Gastrocnemius medialis (tissue), 4 donors: ENCODE measurements at regions of chr5 and their contacts with region 1.

Region 1: DNA sequence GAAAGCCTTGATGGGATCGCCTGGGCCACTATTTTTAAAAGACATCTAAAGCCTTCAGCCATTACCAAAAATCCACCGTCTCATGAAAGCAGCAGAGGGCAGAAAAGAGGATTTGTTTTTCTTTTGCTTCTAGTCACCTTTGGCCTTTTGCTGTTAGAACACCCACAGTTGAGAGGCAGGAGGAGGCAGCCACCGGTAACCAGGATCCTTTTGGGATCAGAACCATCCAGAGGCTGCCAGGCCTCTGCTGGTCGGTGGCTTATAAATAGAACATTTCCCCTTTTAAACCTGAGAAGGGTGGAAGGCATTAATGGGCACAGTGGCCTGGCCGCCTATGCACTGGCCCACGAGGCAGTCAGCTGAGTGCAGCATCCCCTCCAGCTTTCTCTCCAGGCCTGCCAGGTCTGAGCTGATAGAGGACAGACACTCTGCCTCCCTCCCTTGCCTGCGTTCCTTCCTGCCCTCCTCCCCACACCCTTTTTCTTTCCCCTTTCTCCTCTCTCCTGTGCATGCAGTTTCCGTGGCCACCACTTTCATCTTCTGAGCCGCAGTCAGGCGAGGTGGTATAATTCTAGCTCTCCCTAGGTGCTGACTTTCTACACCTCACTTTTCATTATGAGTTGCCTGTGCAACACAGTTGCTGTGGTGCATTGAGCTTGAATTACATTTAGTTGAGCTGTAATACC is 253.4 kb downstream of the ARHGAP26 start:
- DNase-seq: peak; percentile 91 to 97
- ATAC-seq: peak; percentile 88 to 89
- H3K4me3 ChIP-seq: peak overlapping the region in 1 of 4 donors; percentile 33
- H3K27ac ChIP-seq: peak overlapping the region; percentile 84 to 97 (median 90)
- H3K4me1 ChIP-seq: peaks cover 41 to 49% of the 10 kb centered on the region in 2 donors
- H3K27me3 ChIP-seq: no peaks in the 10 kb centered on the region
- CTCF ChIP-seq: peak in 2 of 5 experiments; percentile 9 to 16
- POLR2A ChIP-seq: peak; percentile 58 to 76

Region 2: DNA sequence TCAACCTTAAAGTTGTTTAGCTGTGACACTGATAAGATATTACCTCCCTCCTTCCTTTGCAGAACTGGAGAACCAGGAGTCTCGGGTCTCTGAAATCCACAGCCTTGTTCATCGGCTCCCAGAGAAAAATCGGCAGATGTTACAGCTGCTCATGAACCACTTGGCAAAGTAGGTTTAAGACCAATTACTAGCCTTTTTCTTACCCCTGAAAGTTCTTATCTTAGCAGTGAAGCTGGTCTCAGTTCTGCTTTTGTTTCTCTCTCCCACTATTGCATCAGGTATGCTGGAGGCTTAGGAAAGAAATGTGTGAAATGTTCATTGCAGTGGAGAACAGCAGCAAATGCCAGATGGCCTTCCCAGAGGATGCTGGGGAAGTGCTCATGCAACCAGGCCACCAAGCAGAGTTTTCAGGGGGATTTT is 34.0 kb after region 1 on chr5:
- in situ Hi-C with region 1: no loop called
- intact Hi-C with region 1: loop called (anchors 2 kb)
- DNase-seq: peak in 1 of 2 donors; percentile 67
- ATAC-seq: peak; percentile 47 to 76
- H3K4me3 ChIP-seq: peak overlapping the region in 3 of 4 donors; percentile 0 to 15 (median 10)
- H3K27ac ChIP-seq: peak overlapping the region; percentile 86 to 91 (median 88)
- H3K4me1 ChIP-seq: peaks cover 93 to 97% of the 10 kb centered on the region in 2 donors
- H3K27me3 ChIP-seq: no peaks in the 10 kb centered on the region
- CTCF ChIP-seq: no peak
- POLR2A ChIP-seq: no peak

Region 3: DNA sequence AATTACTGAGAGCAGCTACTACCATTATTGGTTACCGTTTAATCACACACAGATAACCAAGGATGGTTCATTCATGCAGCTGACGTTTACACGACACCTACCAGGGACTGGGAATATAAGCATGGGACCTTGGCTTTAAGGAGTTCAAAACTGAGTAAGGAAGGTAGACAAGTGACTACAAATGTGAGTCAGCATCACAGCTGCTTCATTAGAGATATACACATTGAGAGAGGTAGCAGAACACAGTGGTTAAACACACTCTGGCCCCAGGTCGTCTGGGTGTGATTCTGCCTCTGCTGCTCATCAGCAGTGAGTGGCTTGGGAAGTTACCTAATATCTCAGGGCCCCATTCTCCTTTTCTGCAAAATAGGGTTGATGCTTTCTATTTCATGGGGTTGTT is 111.3 kb after region 1 on chr5:
- in situ Hi-C with region 1: loop called in 3 of 4 experiments (anchors 10 to 25 kb)
- intact Hi-C with region 1: loop called (anchors 2 kb)
- DNase-seq: peak in 1 of 2 donors; percentile 50
- ATAC-seq: peak; percentile 3 to 14
- H3K4me3 ChIP-seq: peak overlapping the region in 2 of 4 donors; percentile 47 to 50
- H3K27ac ChIP-seq: peak overlapping the region; percentile 90 to 97 (median 95)
- H3K4me1 ChIP-seq: peaks cover 90 to 92% of the 10 kb centered on the region in 2 donors
- H3K27me3 ChIP-seq: no peaks in the 10 kb centered on the region
- CTCF ChIP-seq: no peak
- POLR2A ChIP-seq: peak; percentile 22 to 29

Region 4: DNA sequence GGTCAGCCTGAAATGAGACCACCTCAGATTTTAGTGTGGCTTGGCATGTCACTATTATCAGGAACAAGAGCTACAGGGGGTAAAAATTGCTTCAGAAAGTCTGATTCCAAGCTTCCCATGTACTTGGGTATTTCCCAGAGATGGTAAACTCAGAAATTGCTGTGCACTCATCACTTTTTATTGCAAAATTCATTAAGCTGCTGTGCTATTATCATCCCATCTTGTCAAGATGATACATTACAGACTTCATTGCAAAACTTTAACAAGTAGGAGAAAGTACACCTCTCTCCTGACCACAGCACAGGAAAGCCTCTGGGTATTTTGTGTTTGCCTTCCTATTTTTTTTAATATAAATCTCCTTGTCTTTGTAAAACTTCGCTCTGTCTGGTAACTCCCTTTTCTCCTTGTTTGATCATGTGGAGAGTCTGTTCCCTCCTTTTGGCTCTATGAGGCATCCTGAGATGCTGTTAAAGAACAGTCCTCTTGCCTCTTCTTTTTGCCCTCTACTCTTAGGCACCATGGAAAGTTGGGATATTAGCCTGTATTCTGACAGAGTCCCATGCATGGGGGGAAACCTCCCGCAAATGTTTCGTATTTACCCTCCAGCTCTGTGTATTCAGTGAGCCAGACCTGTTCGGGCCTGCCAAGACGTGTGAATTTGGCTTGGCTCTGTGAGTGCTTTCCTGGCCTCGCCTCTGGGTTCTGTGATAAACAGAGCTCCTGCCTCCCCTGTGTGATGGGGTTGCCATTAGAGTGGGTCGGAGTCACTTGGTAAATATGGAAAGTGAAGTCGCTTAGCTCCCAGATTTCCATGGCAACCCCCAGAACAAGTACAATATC is 119.3 kb after region 1 on chr5:
- in situ Hi-C with region 1: loop called in 3 of 4 experiments (anchors 10 to 25 kb)
- intact Hi-C with region 1: no loop called
- DNase-seq: peak; percentile 56 to 68
- ATAC-seq: peak; percentile 37 to 62
- H3K4me3 ChIP-seq: no peak overlapping the region
- H3K27ac ChIP-seq: peak overlapping the region; percentile 90 to 97 (median 95)
- H3K4me1 ChIP-seq: peaks cover 82 to 85% of the 10 kb centered on the region in 2 donors
- H3K27me3 ChIP-seq: no peaks in the 10 kb centered on the region
- CTCF ChIP-seq: no peak
- POLR2A ChIP-seq: no peak

Region 5: DNA sequence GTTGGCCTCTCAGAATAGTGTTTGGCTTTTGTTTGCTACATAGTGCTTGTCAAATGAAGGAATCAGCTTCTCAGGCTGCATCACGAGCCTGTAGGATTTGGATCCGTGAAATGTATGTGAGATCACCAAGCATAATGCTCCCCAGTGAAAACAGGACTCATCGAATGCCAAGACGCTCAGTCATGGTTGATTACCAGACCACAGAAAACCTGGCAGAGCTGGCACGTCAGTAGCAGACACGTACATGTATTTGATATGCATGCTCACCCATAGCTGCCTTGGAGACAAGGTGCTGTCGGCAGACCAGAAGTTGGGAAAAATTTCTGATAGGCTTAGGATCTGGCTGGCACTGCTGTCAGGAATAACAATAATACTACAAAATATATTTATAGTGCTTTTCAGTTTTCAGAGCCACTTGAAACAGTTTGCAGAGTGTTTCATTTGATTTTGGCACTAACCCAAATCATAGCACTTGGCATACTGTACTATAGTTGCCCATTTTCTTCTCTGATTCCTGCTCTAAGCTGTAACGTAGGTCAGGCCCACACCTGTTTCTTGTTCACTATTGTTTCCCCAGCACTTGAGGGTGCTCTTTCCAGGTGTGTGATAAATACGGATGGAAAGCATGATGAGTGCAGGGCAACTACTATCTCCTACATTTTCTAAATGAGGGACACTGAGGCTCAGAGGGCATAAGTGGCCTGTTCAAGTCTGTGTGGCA is 153.9 kb after region 1 on chr5:
- in situ Hi-C with region 1: no loop called
- intact Hi-C with region 1: loop called (anchors 1 kb)
- DNase-seq: peak; percentile 76 to 84
- ATAC-seq: peak; percentile 71 to 85
- H3K4me3 ChIP-seq: no peak overlapping the region
- H3K27ac ChIP-seq: peak overlapping the region; percentile 68 to 84 (median 81)
- H3K4me1 ChIP-seq: peaks cover 41 to 48% of the 10 kb centered on the region in 2 donors
- H3K27me3 ChIP-seq: no peaks in the 10 kb centered on the region
- CTCF ChIP-seq: no peak
- POLR2A ChIP-seq: peak; percentile 19 to 39

Region 6: DNA sequence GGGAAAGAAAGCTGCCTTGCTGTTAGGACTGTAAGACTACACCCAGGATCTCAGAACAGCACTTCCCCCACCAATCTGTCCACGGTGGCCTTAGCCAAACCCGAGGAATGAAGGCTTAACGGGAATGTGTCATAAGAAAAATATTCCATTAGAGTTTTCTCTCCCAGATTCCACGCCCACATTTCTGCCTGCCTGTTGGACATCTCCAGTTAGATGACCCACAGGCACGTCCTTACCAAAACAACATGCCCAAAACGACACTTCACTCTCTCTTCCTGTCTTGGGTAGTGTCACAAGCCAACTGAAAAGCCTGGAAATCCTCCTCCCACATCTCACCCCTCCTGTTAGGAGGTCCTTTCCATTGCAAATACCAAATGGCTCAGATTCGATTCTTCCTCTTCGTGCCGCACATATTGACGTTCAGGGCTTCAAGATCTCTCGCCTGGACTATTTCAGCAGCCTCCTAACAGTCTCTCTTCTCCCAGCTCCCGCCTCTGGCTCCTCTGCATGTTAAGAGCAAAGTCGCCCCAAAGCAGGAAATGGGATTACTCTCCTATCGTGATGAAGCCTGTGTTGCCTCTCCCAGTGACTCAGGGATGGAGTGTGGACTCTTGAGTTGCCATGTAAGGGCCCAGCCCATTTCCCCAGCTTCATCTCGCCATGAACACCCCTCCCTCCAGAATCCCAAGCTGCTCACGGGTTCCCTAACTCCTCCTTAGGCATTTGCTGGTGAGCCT is 220.6 kb after region 1 on chr5:
- in situ Hi-C with region 1: no loop called
- intact Hi-C with region 1: loop called (anchors 2 kb)
- DNase-seq: peak; percentile 81 to 85
- ATAC-seq: peak; percentile 70 to 75
- H3K4me3 ChIP-seq: peak overlapping the region; percentile 2 to 45 (median 8)
- H3K27ac ChIP-seq: peak overlapping the region; percentile 85 to 95 (median 92)
- H3K4me1 ChIP-seq: peaks cover 39 to 49% of the 10 kb centered on the region in 2 donors
- H3K27me3 ChIP-seq: no peaks in the 10 kb centered on the region
- CTCF ChIP-seq: no peak
- POLR2A ChIP-seq: no peak

Region 7: DNA sequence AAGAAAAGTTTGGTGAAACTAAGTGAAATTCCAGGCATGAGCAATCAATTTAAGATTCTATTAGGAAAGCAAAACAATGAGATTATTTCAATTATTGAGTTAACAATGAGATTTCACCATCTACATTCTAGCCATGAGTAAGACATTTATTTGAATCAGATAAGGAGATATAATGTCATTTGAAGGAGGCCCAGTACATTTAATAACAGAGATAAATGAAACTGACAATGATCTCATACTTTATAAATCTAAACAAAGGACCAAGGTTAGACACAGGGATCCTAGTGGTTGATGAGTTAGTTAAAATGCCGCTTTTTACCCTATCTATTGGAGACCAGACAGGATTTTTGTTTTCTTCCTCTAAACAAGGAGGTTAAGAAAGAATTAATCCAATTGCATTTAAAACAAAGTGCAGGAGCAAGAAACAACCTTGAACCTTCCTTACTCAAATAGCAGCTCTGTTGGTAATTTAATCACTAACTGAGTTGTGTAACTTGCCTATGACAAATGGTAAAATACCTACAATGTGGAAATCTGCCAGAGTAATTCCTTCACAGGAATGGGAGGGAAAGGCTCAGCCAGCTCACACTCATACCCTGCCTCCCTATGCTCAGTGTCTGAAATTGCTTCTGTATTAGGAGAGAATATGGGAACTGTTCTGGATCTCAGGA is 483.5 kb after region 1 on chr5:
- in situ Hi-C with region 1: loop called in 1 of 4 experiments (anchors 10 kb)
- intact Hi-C with region 1: no loop called
- DNase-seq: peak in 1 of 2 donors; percentile 39
- ATAC-seq: peak; percentile 93 to 94
- H3K4me3 ChIP-seq: no peak overlapping the region
- H3K27ac ChIP-seq: peak overlapping the region; percentile 56 to 70 (median 62)
- H3K4me1 ChIP-seq: peaks cover 25 to 28% of the 10 kb centered on the region in 2 donors
- H3K27me3 ChIP-seq: no peaks in the 10 kb centered on the region
- CTCF ChIP-seq: no peak
- POLR2A ChIP-seq: no peak